Posterior vena cava (tissue), 2 donors: ENCODE measurements at regions of chr19 and their contacts with region 1.

Region 1: DNA sequence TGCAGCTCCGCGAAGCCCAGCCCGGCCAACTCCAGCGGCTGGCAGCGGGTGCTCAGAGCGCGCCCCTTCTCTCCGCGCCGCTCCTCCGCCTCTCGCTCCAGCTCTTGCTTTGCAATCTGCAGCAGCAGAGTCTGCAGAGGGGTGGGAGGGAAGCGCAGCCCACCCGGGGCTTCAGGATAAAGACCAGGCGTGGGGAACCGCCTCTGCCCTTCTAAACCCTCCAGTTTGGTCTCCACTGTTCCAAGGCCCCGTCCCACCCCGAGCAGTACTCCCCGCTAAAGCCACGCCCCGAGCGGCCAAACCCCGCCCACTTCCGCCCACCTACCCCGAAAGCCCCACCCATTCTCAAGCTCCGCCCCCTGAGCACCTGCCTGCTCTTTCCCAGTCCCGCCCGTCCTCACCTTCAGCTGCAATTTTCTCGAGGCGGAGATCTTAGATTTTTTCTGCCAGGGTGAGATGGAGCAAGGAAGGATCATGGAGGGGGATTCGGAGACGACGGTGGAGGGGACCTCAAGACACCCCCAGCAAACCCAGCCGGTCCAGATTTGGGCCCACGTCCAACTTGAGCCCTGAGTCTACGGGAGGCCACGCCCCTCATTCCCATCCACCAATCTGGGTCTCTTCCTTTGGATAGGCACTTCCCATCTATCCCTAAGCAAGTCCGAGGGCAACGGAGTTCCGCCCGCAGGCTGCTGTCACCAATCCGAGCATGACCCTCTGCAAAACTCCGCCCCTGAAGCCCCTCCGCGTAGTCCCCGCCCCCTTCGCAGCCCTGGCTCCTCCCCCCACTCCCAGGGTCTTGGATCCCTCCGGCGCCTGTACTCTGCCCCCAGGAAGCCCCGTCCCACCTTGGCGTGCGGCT is 1.1 kb downstream of the TNNI3 start:
- DNase-seq: no peak

Region 2: GRCh38 chr19:55117636-55118391 is 38.6 kb before region 1 on chr19 and contains the start of gene PPP1R12C:
- intact Hi-C with region 1: loop called in 1 of 2 experiments (anchors 2 kb)
- DNase-seq: peak; percentile 100
- total RNA-seq, gene PPP1R12C: 207 to 252 TPM